ENCODE measurements at regions of chr7 and their contacts with region 1.

Region 1: DNA sequence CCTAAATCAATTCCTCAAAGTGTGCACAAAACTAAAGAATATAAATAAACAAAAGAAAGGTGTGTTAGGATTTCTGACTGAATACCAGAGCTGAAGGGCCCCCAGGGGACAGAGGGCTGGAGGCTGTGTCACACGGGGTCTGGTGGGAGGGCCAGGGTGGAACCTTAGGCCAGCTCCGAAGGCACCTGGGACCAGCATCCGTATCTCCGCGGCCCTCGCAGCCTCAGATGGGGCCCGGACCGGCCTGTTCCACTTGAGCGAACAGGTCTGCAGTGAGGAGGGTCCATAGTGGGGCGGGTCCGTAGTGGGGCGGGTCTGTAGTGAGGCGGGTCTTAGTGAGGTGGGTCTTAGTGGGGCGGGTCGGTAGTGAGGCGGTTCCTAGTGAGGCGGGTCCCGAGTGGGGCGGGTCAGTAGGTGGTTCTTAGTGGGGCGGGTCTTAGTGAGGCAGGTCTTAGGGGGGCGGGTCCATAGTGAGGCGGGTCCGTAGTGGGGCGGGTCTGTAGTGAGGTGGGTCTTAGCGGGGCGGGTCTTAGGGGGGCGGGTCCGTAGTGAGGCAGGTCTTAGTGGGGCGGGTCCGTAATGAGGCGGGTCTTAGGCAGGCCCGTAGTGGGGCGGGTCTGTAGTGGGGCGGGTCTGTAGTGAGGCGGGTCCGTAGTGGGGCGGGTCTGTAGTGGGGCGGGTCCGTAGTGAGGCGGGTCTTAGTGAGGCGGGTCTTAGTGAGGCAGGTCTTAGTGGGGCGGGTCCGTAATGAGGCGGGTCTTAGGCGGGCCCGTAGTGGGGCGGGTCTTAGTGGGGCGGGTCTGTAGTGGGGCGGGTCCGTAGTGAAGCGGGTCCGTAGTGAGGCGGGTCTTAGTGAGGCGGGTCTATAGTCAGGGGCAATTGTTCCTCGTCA is 15.1 kb downstream of the GPR146 start:
- DNase-seq: no peak
- ATAC-seq: peak in 6 of 8 donors; percentile 6 to 68 (median 23)
- H3K4me3 ChIP-seq: peak overlapping the region in 1 of 10 donors; percentile 27
- H3K27ac ChIP-seq: peak overlapping the region in 5 of 10 donors; percentile 10 to 47 (median 30)
- H3K4me1 ChIP-seq: peaks cover 15 to 43% (median 39%) of the 10 kb centered on the region in 9 donors
- H3K27me3 ChIP-seq: peaks cover 0 to 16% (median 0%) of the 10 kb centered on the region in 7 donors
- CTCF ChIP-seq: no peak

Region 2: GRCh38 chr7:1012004-1012715 is 47.3 kb before region 1 on chr7:
- intact Hi-C with region 1: loop called in 1 of 10 experiments (anchors 5 kb)
- DNase-seq: no peak
- ATAC-seq: no peak
- H3K4me3 ChIP-seq: no peak overlapping the region
- H3K27ac ChIP-seq: no peak overlapping the region
- H3K4me1 ChIP-seq: peaks cover 0 to 6% (median 0%) of the 10 kb centered on the region in 9 donors
- H3K27me3 ChIP-seq: no peaks in the 10 kb centered on the region
- CTCF ChIP-seq: no peak

Region 3: DNA sequence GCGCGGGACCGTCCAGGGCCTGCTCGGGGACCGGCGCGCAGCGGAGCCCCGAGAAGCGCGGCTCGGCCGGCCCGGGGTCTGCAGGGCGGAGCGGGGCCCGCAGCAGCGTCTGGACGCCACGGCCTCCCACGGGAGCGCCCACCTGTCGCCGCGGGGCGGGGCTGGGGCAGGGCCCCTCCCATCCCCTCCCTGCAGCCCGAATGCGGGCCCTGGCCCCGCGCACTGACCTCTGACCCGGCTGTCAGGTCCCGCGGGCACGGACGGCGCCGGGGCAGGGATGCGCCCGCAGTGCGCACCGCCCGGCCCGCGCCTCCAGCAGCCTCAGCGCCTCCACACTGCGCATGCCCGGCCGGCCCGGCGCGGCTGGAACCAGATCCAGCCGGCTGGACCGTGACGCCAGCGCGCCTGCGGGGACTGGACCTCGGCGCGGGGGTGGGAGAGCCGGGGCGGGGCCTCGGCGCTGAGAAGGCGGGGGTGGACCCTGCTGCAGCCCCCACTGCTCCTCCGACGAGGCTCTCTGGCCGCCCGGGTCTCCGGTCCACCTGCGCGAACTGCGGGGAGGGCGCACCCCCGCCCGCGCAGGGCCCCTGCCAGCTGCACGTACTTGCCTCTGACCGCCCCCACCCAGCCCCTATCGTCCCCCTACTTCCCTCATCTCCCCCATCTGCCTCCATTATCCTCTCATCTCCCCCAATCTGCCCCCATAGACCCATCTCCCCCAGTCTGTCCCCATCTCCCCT is 31.2 kb before region 1 on chr7:
- intact Hi-C with region 1: loop called in 2 of 10 experiments (anchors 5 kb)
- DNase-seq: peak; percentile 90 to 93
- ATAC-seq: peak; percentile 93 to 96 (median 94)
- H3K4me3 ChIP-seq: peak overlapping the region; percentile 49 to 95 (median 76)
- H3K27ac ChIP-seq: peak overlapping the region; percentile 69 to 94 (median 92)
- H3K4me1 ChIP-seq: peaks cover 3 to 39% (median 19%) of the 10 kb centered on the region in 9 donors
- H3K27me3 ChIP-seq: no peaks in the 10 kb centered on the region
- CTCF ChIP-seq: no peak